GM13977 (cell line): ENCODE measurements at regions of chr7 and their contacts with region 1.

Region 1: GRCh38 chr7:66564045-66564444 is 64.6 kb upstream of the KCTD7 start:
- DNase-seq: no peak
- CTCF ChIP-seq: no peak

Region 2: DNA sequence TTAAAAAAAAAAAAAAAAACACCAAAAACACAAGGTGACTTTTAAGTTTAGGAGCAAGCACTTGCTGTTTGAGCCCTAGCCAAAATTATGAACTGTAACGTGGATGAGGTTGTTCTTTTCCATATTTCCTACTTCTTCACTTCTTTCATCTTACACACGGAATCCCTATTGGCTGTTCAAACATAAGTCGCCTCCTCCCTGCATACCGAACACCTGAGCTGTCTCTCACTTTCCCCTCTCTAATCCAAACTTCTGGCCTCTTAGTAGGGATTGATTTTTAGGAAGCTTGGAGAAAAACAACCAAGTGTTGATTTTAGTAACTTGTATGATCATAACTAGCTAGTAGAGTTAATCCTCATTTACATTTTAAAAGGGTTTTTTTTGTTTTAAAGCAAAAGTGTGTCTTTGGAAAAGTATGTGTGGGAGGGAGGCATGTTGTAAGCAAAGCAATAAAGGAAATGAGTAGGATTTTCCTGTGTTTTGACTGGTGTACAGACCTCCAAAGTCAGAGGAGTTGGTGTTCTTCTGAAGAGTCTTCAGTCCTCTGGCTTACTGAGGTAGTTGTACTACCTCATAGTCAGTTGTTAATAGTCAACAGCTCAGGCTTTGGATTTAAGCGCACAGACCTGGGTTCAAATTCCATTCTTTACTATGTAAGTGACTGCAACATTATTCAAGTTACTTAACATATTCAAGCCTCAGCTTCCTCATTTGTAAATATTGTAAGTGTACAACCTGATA is 215.8 kb after region 1 on chr7:
- in situ Hi-C with region 1: loop called (anchors 10 kb)
- DNase-seq: no peak
- CTCF ChIP-seq: no peak